ENCODE measurements at regions of chr10 and their contacts with region 1.

Region 1: DNA sequence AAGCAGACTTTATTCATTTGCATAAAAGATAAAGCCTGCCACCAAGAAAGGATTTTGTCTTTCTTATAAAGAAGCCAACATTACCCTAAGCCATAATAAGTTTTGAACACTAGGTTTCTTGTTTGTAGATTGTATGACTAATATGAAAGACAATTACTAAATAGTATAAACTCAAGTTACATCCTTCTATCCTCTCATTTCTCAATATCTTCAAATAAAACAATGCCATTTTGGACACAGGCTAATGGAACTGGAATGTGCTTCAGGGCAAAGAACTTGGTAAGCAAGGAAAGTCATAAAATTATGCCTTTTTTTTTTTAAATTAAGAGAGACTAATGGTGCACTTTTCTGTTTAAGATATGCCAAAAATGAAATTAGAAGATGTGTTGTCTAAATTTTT is 137.7 kb downstream of the DKK1 start:
- DNase-seq: no peak
- H3K4me3 ChIP-seq: no peak overlapping the region
- H3K27ac ChIP-seq: no peak overlapping the region
- H3K4me1 ChIP-seq: no peaks in the 10 kb centered on the region
- H3K27me3 ChIP-seq: no peaks in the 10 kb centered on the region
- CTCF ChIP-seq: no peak
- POLR2A ChIP-seq: no peak

Region 2: DNA sequence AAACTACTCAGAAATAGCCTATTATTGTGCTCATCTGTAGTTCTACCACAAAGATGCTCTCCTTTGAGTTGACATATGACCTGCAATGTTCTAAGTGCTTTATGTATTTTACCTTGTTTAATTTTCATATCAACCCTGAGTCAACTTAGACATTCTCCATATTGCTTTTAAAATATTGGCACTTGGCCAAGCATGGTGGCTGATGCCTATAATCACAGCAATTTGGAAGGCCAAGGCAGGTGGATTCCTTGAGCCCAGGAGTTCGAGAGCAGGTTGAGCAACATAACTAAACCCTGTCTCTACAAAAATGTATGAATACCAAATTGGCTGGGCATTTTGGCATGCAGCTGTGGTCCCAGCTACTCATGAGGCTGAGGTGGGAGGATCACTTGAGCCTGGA is 1327.0 kb before region 1 on chr10:
- intact Hi-C with region 1: loop called (anchors 5 kb)
- DNase-seq: no peak
- H3K4me3 ChIP-seq: no peak overlapping the region
- H3K27ac ChIP-seq: no peak overlapping the region
- H3K4me1 ChIP-seq: no peaks in the 10 kb centered on the region
- H3K27me3 ChIP-seq: no peaks in the 10 kb centered on the region
- CTCF ChIP-seq: no peak
- POLR2A ChIP-seq: no peak

Region 3: DNA sequence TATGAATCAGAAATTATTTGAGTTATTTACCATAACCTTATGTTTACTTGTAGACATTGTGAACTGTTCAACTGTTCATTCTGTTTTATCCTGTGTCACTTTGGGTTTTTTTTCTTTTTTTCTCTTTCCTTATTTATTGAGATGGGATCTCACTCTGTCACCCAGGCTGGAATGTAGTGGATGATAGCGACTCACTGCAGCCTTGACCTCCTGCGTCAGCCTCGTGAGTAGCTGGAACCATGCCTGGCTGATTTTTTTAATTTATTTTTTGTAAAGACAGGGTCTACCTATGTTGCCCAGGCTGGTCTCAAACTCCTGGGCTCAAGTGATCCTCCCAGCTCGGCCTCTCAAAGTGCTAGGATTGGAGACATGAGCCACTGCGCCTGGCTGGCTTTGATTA is 849.5 kb before region 1 on chr10:
- intact Hi-C with region 1: no loop called
- DNase-seq: no peak
- H3K4me3 ChIP-seq: no peak overlapping the region
- H3K27ac ChIP-seq: no peak overlapping the region
- H3K4me1 ChIP-seq: no peaks in the 10 kb centered on the region
- H3K27me3 ChIP-seq: no peaks in the 10 kb centered on the region
- CTCF ChIP-seq: no peak
- POLR2A ChIP-seq: no peak

Region 4: DNA sequence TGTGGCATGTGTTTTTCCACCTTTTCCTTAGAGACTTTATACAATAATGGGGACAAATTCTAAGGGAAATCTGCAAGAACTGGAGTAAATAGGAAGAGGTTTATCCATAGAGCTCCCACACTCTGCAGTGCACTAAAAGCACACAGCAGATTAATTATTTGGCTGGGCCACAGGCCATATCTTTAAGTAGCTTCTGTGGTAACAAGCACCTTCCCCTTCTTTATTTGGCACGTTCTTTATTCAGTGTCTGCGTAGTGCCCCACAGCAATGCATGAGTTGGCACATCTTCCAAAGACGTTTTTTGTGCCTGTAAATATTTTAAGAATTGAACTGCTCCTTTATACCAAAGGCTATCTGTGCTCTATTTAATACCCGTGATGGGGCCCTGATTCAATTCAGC is 425.6 kb after region 1 on chr10:
- intact Hi-C with region 1: no loop called
- DNase-seq: no peak
- H3K4me3 ChIP-seq: no peak overlapping the region
- H3K27ac ChIP-seq: no peak overlapping the region
- H3K4me1 ChIP-seq: no peaks in the 10 kb centered on the region
- H3K27me3 ChIP-seq: no peaks in the 10 kb centered on the region
- CTCF ChIP-seq: no peak
- POLR2A ChIP-seq: no peak